ENCODE measurements at regions of chr19 and their contacts with region 1.

Region 1: GRCh38 chr19:43555185-43555770 is 20.0 kb downstream of the XRCC1 start:
- DNase-seq: no peak
- H3K4me3 ChIP-seq: no peak overlapping the region
- H3K27ac ChIP-seq: no peak overlapping the region
- H3K27me3 ChIP-seq: no peaks in the 10 kb centered on the region
- CTCF ChIP-seq: peak; percentile 89

Region 2: DNA sequence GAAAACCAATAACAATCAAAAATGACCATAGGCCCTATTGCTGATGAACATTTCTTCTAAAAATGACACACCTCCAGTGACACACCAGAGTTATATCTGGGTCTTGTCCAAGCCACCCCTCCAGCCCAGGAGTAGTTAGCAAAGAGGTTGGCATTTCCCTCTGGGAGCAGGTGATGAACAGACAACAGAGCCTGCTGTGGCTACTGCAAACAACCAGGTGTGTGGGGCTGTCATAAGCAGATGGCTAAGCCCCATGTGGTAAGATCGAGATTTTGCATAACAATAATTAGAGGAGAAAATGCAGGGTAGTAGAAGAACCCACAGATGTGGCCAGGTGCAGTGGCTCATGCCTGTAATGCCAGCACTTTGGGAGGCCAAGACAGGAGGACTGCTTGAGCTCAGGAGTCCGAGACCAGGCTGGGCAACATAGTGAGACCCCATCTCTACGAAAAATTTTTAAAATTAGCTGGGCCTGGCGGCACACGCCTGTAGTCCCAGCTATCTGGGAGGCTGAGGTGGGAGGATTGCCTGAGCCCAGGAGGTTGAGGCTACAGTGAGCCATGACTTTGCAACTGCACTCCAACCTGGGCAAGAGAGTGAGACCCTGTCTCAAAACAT is 15.0 kb after region 1 on chr19:
- CTCF ChIA-PET with region 1: interaction called, 20 read pairs
- POLR2A ChIA-PET with region 1: no interaction called
- DNase-seq: no peak
- H3K4me3 ChIP-seq: no peak overlapping the region
- H3K27ac ChIP-seq: no peak overlapping the region
- H3K27me3 ChIP-seq: no peaks in the 10 kb centered on the region
- CTCF ChIP-seq: no peak

Region 3: GRCh38 chr19:43595999-43596841 is 40.9 kb after region 1 on chr19 and contains the starts of genes IRGQ and ZNF576:
- CTCF ChIA-PET with region 1: interaction called, 42 read pairs
- POLR2A ChIA-PET with region 1: interaction called, 3 read pairs
- DNase-seq: peak; percentile 99
- H3K4me3 ChIP-seq: peak within 1 kb of the TSS; percentile 79
- H3K27ac ChIP-seq: peak within 1 kb of the TSS; percentile 99
- H3K27me3 ChIP-seq: no peaks in the 10 kb centered on the region
- CTCF ChIP-seq: 0 out of 2 replicates have a peak, but pooled peaks have one; percentile 6
- polyA plus RNA-seq, gene IRGQ: 11.2 and 11.6 TPM in 2 replicates
- polyA plus RNA-seq, gene ZNF576: 9.3 and 11.3 TPM in 2 replicates

Region 4: DNA sequence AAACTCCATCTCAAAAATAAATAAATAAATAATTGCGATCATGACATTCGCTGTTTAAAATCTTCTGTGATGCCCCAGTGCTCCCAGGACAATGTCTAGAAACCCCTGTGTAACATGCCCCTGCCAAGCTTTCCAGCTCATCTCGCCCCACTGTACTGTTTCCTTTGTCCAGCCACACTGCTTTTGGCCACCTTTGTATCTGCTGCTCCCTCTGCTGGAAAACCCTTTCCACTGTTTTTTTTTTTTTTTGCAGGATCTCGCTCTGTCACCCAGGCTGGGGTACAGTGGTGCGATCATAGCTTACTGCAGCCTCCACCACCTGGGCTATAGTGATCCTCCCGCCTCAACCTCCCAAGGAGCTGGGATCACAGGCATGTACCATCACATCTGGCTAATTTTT is 107.2 kb after region 1 on chr19:
- CTCF ChIA-PET with region 1: interaction called, 12 read pairs
- POLR2A ChIA-PET with region 1: no interaction called
- DNase-seq: no peak
- H3K4me3 ChIP-seq: no peak overlapping the region
- H3K27ac ChIP-seq: no peak overlapping the region
- H3K27me3 ChIP-seq: no peaks in the 10 kb centered on the region
- CTCF ChIP-seq: peak; percentile 46